Psoas muscle (tissue), 8 donors: ENCODE measurements at regions of chr5 and their contacts with region 1.

Region 1: DNA sequence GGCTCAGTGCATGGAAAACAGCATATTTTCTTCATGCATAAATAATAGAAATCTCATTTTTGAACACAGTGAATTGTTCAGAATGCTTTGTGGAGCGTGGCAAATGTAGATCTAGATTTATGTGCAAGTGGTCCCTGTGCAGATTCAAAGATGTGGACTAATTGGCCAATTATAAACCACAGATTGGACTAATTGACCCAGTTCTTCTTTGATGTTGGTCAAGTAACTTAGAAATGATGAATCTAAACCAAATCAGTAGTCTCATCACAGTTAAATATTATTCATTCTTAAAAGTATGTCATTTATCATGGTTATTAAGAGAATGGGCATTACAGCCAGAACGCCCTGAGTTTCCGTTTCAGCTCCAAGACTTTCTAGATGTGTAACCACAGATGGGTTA is 11.7 kb upstream of the PDE4D start:
- DNase-seq: no peak
- ATAC-seq: no peak
- H3K4me3 ChIP-seq: no peak overlapping the region
- H3K27ac ChIP-seq: no peak overlapping the region
- H3K4me1 ChIP-seq: no peaks in the 10 kb centered on the region
- H3K27me3 ChIP-seq: no peaks in the 10 kb centered on the region
- CTCF ChIP-seq: no peak

Region 2: DNA sequence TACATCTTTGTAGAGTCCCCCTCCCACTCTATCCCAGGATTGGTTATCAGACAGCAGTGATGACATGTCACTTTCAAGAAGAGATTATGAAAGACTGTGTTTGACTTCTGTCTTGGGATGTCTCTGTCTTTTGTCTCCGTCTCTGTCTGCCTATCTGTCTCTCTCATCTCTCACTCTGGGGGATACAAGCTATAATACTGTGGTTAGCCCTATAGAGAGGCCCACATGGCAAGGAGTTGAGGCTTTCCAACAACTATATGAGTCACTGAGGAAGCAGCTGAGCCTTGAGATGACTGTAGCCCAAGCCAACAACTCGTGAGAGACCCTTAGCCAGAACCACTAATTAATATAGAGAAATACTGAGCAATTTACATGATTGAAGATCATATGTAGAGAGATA is 296.4 kb before region 1 on chr5:
- intact Hi-C with region 1: no loop called
- DNase-seq: no peak
- ATAC-seq: peak in 1 of 4 donors; percentile 24
- H3K4me3 ChIP-seq: no peak overlapping the region
- H3K27ac ChIP-seq: no peak overlapping the region
- H3K4me1 ChIP-seq: peaks cover 5% of the 10 kb centered on the region
- H3K27me3 ChIP-seq: no peaks in the 10 kb centered on the region
- CTCF ChIP-seq: no peak

Region 3: DNA sequence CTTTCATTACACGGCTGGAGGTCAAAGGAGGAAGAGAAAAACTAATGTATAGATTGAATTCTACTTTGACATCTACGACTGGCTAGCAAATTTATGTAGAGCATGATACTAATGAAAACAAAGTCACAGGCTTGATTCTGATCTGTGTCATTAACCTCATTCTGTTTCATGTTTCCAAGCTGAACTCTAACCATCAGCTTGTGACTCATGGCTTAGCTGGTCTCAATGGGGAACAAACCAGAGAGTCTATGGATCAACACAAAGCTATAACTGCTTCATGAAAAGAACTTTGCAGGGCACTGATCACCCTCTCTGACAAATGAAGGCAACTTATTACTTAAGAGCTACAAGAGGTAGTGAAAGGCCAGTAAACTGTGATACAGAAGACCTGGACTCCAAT is 11.9 kb after region 1 on chr5:
- intact Hi-C with region 1: loop called in 1 of 2 experiments (anchors 1 kb)
- DNase-seq: no peak
- ATAC-seq: no peak
- H3K4me3 ChIP-seq: no peak overlapping the region
- H3K27ac ChIP-seq: no peak overlapping the region
- H3K4me1 ChIP-seq: no peaks in the 10 kb centered on the region
- H3K27me3 ChIP-seq: no peaks in the 10 kb centered on the region
- CTCF ChIP-seq: no peak

Region 4: GRCh38 chr5:59943452-59944113 is 38.4 kb after region 1 on chr5:
- intact Hi-C with region 1: no loop called
- DNase-seq: no peak
- ATAC-seq: no peak
- H3K4me3 ChIP-seq: no peak overlapping the region
- H3K27ac ChIP-seq: no peak overlapping the region
- H3K4me1 ChIP-seq: no peaks in the 10 kb centered on the region
- H3K27me3 ChIP-seq: peaks cover 0 to 2% (median 0%) of the 10 kb centered on the region in 3 donors
- CTCF ChIP-seq: no peak